CD8-positive, alpha-beta T cell (primary cell): ENCODE measurements at regions of chr4 and their contacts with region 1.

Region 1: GRCh38 chr4:183444214-183445066 is at the start of gene CDKN2AIP:
- DNase-seq: peak; percentile 90 to 98 (median 93)
- ATAC-seq: peak; percentile 85
- H3K4me3 ChIP-seq: peak within 1 kb of the TSS; percentile 84 to 92
- H3K4me3 Mint-ChIP-seq: peak within 1 kb of the TSS; percentile 98
- H3K27ac ChIP-seq: peak within 1 kb of the TSS; percentile 84 to 91
- H3K27ac Mint-ChIP-seq: peak within 1 kb of the TSS; percentile 99
- H3K4me1 ChIP-seq: peaks cover 43% of the 10 kb centered on the region
- H3K4me1 Mint-ChIP-seq: peaks cover 59% of the 10 kb centered on the region
- H3K27me3 ChIP-seq: no peaks in the 10 kb centered on the region
- H3K27me3 Mint-ChIP-seq: no peaks in the 10 kb centered on the region
- CTCF ChIP-seq: no peak
- total RNA-seq, gene CDKN2AIP: 51.2 to 51.9 TPM

Region 2: GRCh38 chr4:182917182-182918043 is 527.0 kb before region 1 on chr4 and contains the start of gene DCTD:
- CTCF ChIA-PET with region 1: no interaction called
- POLR2A ChIA-PET with region 1: interaction called, 5 read pairs
- intact Hi-C with region 1: loop called (anchors 2 kb)
- DNase-seq: peak; percentile 47 to 89 (median 80)
- ATAC-seq: peak; percentile 72
- H3K4me3 ChIP-seq: peak within 1 kb of the TSS; percentile 82 to 85
- H3K4me3 Mint-ChIP-seq: peak within 1 kb of the TSS; percentile 89
- H3K27ac ChIP-seq: peak within 1 kb of the TSS; percentile 96 to 97
- H3K27ac Mint-ChIP-seq: peak within 1 kb of the TSS; percentile 92
- H3K4me1 ChIP-seq: peaks cover 32% of the 10 kb centered on the region
- H3K4me1 Mint-ChIP-seq: peaks cover 60% of the 10 kb centered on the region
- H3K27me3 ChIP-seq: no peaks in the 10 kb centered on the region
- H3K27me3 Mint-ChIP-seq: peaks cover under 1% of the 10 kb centered on the region
- CTCF ChIP-seq: peak; percentile 20
- total RNA-seq, gene DCTD: 49.6 to 57.0 TPM

Region 3: GRCh38 chr4:183407128-183407585 is 37.3 kb before region 1 on chr4:
- CTCF ChIA-PET with region 1: interaction called, 11 read pairs
- POLR2A ChIA-PET with region 1: interaction called, 17 read pairs
- intact Hi-C with region 1: loop called (anchors 1 to 5 kb)
- DNase-seq: peak; percentile 87 to 96 (median 90)
- ATAC-seq: peak; percentile 97
- H3K4me3 ChIP-seq: peak overlapping the region; percentile 54 to 65
- H3K4me3 Mint-ChIP-seq: peak overlapping the region; percentile 85
- H3K27ac ChIP-seq: peak overlapping the region; percentile 52 to 72
- H3K27ac Mint-ChIP-seq: peak overlapping the region; percentile 89
- H3K4me1 ChIP-seq: peaks cover 6% of the 10 kb centered on the region
- H3K4me1 Mint-ChIP-seq: peaks cover 13% of the 10 kb centered on the region
- H3K27me3 ChIP-seq: no peaks in the 10 kb centered on the region
- H3K27me3 Mint-ChIP-seq: no peaks in the 10 kb centered on the region
- CTCF ChIP-seq: peak; percentile 74

Region 4: GRCh38 chr4:183659029-183659871 is 214.8 kb after region 1 on chr4 and contains the starts of genes RWDD4 and TRAPPC11:
- CTCF ChIA-PET with region 1: no interaction called
- POLR2A ChIA-PET with region 1: interaction called, 13 read pairs
- intact Hi-C with region 1: loop called (anchors 1 kb)
- DNase-seq: peak; percentile 90 to 99 (median 95)
- ATAC-seq: peak; percentile 96
- H3K4me3 ChIP-seq: peak within 1 kb of the TSS; percentile 72 to 83
- H3K4me3 Mint-ChIP-seq: peak within 1 kb of the TSS; percentile 92
- H3K27ac ChIP-seq: peak within 1 kb of the TSS; percentile 83 to 89
- H3K27ac Mint-ChIP-seq: peak within 1 kb of the TSS; percentile 91
- H3K4me1 ChIP-seq: peaks cover 25% of the 10 kb centered on the region
- H3K4me1 Mint-ChIP-seq: peaks cover 42% of the 10 kb centered on the region
- H3K27me3 ChIP-seq: no peaks in the 10 kb centered on the region
- H3K27me3 Mint-ChIP-seq: no peaks in the 10 kb centered on the region
- CTCF ChIP-seq: no peak
- total RNA-seq, gene RWDD4: 9.0 to 12.1 TPM
- total RNA-seq, gene TRAPPC11: 14.7 to 22.1 TPM

Region 5: GRCh38 chr4:184538023-184538599 is 1093.7 kb after region 1 on chr4:
- CTCF ChIA-PET with region 1: no interaction called
- POLR2A ChIA-PET with region 1: no interaction called
- intact Hi-C with region 1: loop called in 1 of 2 experiments (anchors 10 kb)
- DNase-seq: peak; percentile 38 to 88 (median 65)
- ATAC-seq: peak; percentile 45
- H3K4me3 ChIP-seq: peak overlapping the region; percentile 57 to 63
- H3K4me3 Mint-ChIP-seq: peak overlapping the region; percentile 91
- H3K27ac ChIP-seq: peak overlapping the region; percentile 84 to 90
- H3K27ac Mint-ChIP-seq: peak overlapping the region; percentile 100
- H3K4me1 ChIP-seq: peaks cover 33% of the 10 kb centered on the region
- H3K4me1 Mint-ChIP-seq: peaks cover 46% of the 10 kb centered on the region
- H3K27me3 ChIP-seq: no peaks in the 10 kb centered on the region
- H3K27me3 Mint-ChIP-seq: no peaks in the 10 kb centered on the region
- CTCF ChIP-seq: peak; percentile 36

Region 6: DNA sequence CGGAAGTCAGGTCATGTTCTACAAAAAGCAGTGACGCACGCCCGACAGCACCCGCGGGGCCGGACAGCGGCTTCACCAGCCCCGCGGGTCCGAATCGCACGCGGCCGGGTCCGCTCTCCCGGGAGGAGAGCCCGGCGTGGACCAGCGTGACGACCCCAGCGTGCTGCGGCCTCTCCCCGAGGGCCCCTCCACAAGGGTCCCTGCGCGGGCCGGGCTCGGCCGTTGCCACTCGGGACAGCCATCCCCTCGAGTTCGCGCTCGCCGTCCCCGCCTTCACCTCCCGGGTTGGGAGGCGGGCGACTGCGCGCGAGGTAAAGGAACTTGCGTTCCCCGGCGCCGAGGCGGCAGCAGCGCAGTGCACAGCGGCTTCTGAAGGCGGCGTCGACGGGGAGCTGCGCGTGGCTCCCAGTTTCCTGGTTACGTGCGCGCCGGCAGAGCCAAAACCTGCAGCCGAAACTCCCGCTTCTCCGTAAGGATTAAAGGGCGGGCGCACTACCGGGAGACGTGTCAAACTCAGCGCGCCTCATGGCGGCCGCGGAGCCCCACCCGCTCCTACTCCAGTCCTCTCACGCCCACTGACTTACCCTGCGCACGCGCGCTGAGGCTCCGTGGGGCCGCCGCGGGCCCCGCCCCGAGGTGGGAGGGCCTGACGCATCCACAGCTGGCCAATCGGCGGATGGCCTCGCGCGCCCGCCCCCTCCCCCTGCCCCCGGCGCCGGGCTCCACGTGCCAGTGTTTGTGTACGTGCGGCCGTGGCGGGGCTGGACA is 1951.7 kb after region 1 on chr4:
- CTCF ChIA-PET with region 1: no interaction called
- POLR2A ChIA-PET with region 1: no interaction called
- intact Hi-C with region 1: loop called (anchors 10 kb)
- DNase-seq: peak; percentile 91 to 98 (median 95)
- ATAC-seq: peak; percentile 92
- H3K4me3 ChIP-seq: peak overlapping the region; percentile 73 to 95
- H3K4me3 Mint-ChIP-seq: peak overlapping the region; percentile 95
- H3K27ac ChIP-seq: peak overlapping the region; percentile 98 to 99
- H3K27ac Mint-ChIP-seq: peak overlapping the region; percentile 99
- H3K4me1 ChIP-seq: peaks cover 16% of the 10 kb centered on the region
- H3K4me1 Mint-ChIP-seq: peaks cover 20% of the 10 kb centered on the region
- H3K27me3 ChIP-seq: no peaks in the 10 kb centered on the region
- H3K27me3 Mint-ChIP-seq: no peaks in the 10 kb centered on the region
- CTCF ChIP-seq: no peak